Left colon (tissue), 2 donors: ENCODE measurements at regions of chr1 and their contacts with region 1.

Region 1: DNA sequence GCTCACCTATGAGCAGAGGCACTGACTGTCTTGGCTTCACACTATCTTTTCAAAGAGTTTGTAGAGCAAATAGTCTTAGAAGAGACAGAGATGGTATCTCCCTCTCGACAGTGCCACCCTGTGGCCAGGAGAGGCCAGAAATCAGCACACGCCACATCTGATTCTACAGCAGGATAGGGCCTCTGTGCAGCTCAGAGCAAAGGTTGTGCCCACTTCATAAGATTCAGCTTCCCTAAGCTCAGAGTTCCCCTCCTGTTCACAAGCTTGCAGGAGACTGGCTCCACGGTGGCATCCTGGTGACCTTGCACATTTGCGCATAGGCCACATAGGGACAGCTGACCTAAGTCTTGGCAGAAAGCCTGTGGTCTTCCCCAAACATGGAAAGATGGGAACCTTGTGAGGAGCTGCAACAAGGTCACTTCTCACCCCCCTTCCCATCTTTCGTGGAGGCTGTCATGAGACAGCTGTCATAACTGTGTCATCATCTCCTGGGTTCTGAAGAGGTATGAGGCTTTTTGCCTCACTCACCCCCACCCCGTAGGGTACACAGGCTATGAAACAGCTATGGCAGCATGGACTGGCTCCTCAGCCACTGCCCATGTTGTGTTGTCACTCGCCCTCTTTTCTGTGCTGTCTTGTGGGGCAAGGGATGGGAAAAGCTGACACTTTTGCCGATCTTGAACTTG is 3.0 kb downstream of the ITLN2 start:
- DNase-seq: peak; percentile 39 to 87
- ATAC-seq: peak; percentile 85

Region 2: GRCh38 chr1:160726498-160727315 is 224.9 kb before region 1 on chr1:
- intact Hi-C with region 1: loop called in 1 of 2 experiments (anchors 10 kb)
- DNase-seq: peak; percentile 43 to 59
- ATAC-seq: peak; percentile 97

Region 3: GRCh38 chr1:160795951-160796383 is 155.6 kb before region 1 on chr1 and contains the start of gene LY9:
- intact Hi-C with region 1: no loop called
- DNase-seq: peak; percentile 47 to 52
- ATAC-seq: peak; percentile 46
- total RNA-seq, gene LY9: 0.67 to 2.6 TPM

Region 4: DNA sequence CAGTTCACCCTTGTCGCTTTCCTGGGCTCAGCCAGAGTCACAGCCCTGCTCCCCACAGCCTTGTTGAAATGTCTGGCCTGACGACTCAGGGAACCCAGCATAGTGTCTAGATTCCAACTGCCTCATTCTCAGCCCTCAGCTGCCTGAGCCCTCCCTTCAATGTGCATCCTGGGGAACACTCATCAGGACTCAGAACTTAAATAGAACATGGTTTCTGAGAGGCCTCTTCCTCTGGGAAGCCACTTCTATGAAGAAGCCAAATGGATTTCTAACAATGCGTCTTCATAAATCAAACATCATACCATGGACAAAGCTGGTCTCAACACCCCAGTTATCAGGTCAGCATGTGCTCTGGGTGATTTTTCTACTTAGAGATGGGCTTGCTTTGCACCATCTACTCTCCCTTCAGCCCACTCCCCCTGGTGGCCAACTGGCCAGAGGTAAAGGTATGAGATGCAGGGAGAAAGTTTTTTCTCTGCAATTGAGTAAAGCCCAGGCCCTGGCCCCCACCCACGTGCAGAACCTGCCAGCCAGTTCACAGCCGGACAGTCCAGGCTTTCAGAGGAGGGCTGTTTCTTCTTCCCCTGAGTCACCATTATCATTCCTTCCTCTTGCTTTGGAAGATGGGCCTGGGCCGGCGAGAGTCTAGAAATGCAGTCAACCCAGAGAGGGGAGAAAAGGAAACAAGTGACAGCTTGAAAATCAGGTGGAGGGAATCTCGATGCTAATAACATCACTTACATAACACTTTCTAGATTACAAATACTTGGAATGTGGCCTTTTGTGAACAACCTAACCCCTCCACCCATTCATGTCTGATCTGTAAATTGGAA is 121.0 kb before region 1 on chr1:
- intact Hi-C with region 1: loop called in 1 of 2 experiments (anchors 5 kb)
- DNase-seq: peak; percentile 65 to 90
- ATAC-seq: peak; percentile 88